HCT116 (cell line): ENCODE measurements at regions of chr1 and their contacts with region 1.

Region 1: GRCh38 chr1:243325305-243325890 is 69.6 kb downstream of the SDCCAG8 start:
- DNase-seq: peak; percentile 38
- ATAC-seq: peak; percentile 59; the same call in 1 of the 2 replicates
- H3K4me3 ChIP-seq: no peak overlapping the region
- H3K27ac ChIP-seq: no peak overlapping the region
- H3K4me1 ChIP-seq: no peaks in the 10 kb centered on the region
- H3K27me3 ChIP-seq: no peaks in the 10 kb centered on the region
- CTCF ChIP-seq: peak; percentile 58 to 75 (median 73)
- POLR2A ChIP-seq: no peak
- RAD21 ChIP-seq: peak; percentile 93

Region 2: GRCh38 chr1:241895013-241895412 is 1430.4 kb before region 1 on chr1:
- CTCF ChIA-PET with region 1: no interaction called
- POLR2A ChIA-PET with region 1: no interaction called
- RAD21 ChIA-PET with region 1: no interaction called
- intact Hi-C with region 1: loop called (anchors 10 kb)
- DNase-seq: no peak
- ATAC-seq: no peak
- H3K4me3 ChIP-seq: no peak overlapping the region
- H3K27ac ChIP-seq: no peak overlapping the region
- H3K4me1 ChIP-seq: no peaks in the 10 kb centered on the region
- H3K27me3 ChIP-seq: no peaks in the 10 kb centered on the region
- CTCF ChIP-seq: no peak
- POLR2A ChIP-seq: no peak
- RAD21 ChIP-seq: no peak

Region 3: GRCh38 chr1:242023805-242024204 is 1301.6 kb before region 1 on chr1:
- CTCF ChIA-PET with region 1: no interaction called
- POLR2A ChIA-PET with region 1: no interaction called
- RAD21 ChIA-PET with region 1: no interaction called
- intact Hi-C with region 1: loop called (anchors 5 kb)
- DNase-seq: no peak
- ATAC-seq: no peak
- H3K4me3 ChIP-seq: no peak overlapping the region
- H3K27ac ChIP-seq: no peak overlapping the region
- H3K4me1 ChIP-seq: no peaks in the 10 kb centered on the region
- H3K27me3 ChIP-seq: no peaks in the 10 kb centered on the region
- CTCF ChIP-seq: no peak
- POLR2A ChIP-seq: no peak
- RAD21 ChIP-seq: no peak

Region 4: DNA sequence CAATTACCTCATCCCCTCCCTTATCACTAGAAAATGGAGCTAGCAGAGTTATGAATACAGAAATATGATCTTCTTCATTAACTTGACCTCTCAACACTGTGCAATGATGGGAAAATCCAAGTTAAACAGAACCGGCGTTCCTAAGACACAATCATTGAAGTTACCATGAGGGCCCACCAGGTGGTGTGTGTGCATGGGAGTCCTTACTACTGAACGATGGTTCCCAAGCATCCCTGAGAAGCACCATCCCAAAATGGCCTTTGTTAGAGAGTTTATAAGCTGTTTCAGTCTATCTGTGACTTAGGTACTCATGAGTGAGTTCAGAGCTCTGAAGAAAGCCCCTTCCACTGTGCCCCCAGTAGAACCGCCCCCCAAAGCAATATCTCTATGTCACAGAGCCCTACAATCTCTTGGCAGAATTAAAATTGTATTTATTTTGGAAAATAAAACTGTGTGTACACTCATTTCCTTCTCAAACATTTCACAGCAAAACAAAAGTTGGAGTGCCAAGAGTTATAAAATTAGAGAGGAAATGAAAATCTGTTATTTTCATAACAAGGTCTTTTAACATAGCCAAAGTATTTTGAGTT is 857.7 kb before region 1 on chr1:
- CTCF ChIA-PET with region 1: no interaction called
- POLR2A ChIA-PET with region 1: no interaction called
- RAD21 ChIA-PET with region 1: no interaction called
- intact Hi-C with region 1: loop called (anchors 5 kb)
- DNase-seq: peak; percentile 22
- ATAC-seq: peak; percentile 80
- H3K4me3 ChIP-seq: no peak overlapping the region
- H3K27ac ChIP-seq: no peak overlapping the region
- H3K4me1 ChIP-seq: no peaks in the 10 kb centered on the region
- H3K27me3 ChIP-seq: no peaks in the 10 kb centered on the region
- CTCF ChIP-seq: peak; percentile 39 to 65 (median 64); a peak in 5 of 6 replicates
- POLR2A ChIP-seq: no peak
- RAD21 ChIP-seq: peak; percentile 54

Region 5: GRCh38 chr1:242651817-242652216 is 673.6 kb before region 1 on chr1:
- CTCF ChIA-PET with region 1: no interaction called
- POLR2A ChIA-PET with region 1: no interaction called
- RAD21 ChIA-PET with region 1: no interaction called
- intact Hi-C with region 1: loop called (anchors 5 kb)
- DNase-seq: no peak
- ATAC-seq: peak; percentile 38; the same call in 1 of the 2 replicates
- H3K4me3 ChIP-seq: no peak overlapping the region
- H3K27ac ChIP-seq: no peak overlapping the region
- H3K4me1 ChIP-seq: no peaks in the 10 kb centered on the region
- H3K27me3 ChIP-seq: no peaks in the 10 kb centered on the region
- CTCF ChIP-seq: peak in 2 of 3 experiments; percentile 51 to 52; a peak in 4 of 6 replicates
- POLR2A ChIP-seq: no peak
- RAD21 ChIP-seq: 0 out of 2 replicates have a peak, but pooled peaks have one; percentile 4

Region 6: GRCh38 chr1:243275316-243275715 is 50.1 kb before region 1 on chr1:
- CTCF ChIA-PET with region 1: no interaction called
- POLR2A ChIA-PET with region 1: no interaction called
- RAD21 ChIA-PET with region 1: no interaction called
- intact Hi-C with region 1: no loop called
- DNase-seq: no peak
- ATAC-seq: no peak
- H3K4me3 ChIP-seq: no peak overlapping the region
- H3K27ac ChIP-seq: no peak overlapping the region
- H3K4me1 ChIP-seq: peaks cover under 1 to 4% of the 10 kb centered on the region in 2 experiments; a peak in 3 of 4 replicates
- H3K27me3 ChIP-seq: no peaks in the 10 kb centered on the region
- CTCF ChIP-seq: no peak
- POLR2A ChIP-seq: no peak
- RAD21 ChIP-seq: no peak